B cell (primary cell): ENCODE measurements at regions of chr10 and their contacts with region 1.

Region 1: DNA sequence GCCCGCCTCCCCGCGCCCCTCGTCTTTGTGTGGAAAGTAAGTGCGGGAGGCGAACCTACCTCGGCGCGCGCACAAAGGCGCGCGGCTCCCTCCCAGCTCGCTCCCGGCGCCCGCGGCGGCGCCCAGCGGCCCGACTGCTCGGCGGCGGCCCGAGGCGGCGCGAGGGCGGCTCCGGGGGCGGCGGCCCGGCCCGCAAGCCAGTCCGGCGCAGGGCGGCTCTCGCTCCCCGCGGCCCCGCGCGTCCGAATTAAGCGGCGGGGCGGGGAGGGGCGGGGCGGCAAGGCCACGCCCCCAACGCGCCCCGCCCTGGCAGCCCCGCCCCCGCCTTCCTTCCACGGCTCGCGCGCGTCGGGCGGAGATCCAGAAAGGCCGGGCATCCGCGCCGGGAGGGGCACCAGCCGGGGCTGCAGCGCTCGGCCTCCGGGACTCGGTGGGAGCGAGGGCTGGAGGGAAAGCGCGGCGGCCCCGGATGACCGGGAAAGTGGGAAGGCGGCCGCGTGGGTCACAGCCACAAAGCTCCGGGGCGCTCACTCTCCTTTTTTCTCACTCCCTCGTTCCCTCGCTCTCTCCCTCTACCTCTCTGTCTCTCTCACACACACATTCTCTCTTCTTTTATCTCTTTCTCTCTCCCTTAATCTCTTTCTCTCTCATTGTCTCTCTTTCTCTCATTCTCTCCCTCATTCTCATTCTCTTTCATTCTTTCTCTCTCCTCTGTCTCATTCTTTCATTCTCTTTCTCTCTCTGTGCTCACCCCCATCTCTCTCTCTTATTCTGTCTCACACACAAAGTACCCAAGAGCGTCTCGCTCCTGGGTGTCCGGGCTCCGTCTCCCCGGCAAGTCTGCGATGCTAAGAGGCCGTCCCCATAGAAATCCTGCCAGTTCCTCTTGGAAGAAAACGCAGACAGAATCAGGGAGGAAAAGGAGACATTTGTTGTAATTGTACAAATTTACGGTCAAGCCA is 170.2 kb downstream of the FAM107B start:
- DNase-seq: peak; percentile 84
- ATAC-seq: peak; percentile 68
- H3K4me3 ChIP-seq: peak overlapping the region; percentile 58 to 85 (median 70)
- H3K4me3 Mint-ChIP-seq: peak overlapping the region; percentile 86
- H3K27ac ChIP-seq: peak overlapping the region; percentile 54 to 61
- H3K27ac Mint-ChIP-seq: peak overlapping the region; percentile 78
- H3K4me1 ChIP-seq: peaks cover 53 to 62% of the 10 kb centered on the region in 2 donors
- H3K4me1 Mint-ChIP-seq: peaks cover 75% of the 10 kb centered on the region
- H3K27me3 ChIP-seq: no peaks in the 10 kb centered on the region
- H3K27me3 Mint-ChIP-seq: no peaks in the 10 kb centered on the region
- CTCF ChIP-seq: peak; percentile 16

Region 2: DNA sequence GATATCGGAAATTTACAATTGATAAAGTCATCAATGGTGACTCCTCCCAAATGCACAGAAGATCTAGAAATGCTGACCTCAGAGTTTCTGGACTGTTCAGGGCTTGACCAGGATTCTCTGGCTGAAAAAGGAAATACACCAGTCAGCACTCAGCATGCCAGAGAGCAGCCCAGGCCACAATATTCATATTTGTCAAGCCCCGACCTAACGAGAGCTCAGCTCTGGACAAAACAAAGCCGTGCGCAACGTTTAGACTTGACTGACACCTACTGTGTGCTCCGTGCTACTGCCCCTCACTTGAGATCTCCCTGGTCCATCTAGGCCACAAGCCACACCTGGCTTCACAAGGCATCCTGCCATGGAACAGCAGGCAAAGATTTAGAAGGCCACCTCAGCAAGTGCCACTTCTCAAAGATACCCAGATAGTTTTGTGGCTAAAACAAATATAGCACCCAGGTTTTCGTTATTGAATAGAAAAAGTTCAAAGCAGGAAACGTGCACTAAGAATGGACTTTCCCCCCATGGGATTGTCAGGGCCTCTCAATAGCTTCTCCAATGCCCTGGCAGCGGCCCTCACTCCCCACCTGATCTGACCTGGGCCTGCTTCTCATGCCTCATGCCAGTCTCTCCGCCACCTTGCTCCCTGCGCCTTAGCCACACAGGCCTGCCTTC is 48.0 kb before region 1 on chr10:
- CTCF ChIA-PET with region 1: no interaction called
- POLR2A ChIA-PET with region 1: no interaction called
- intact Hi-C with region 1: loop called (anchors 2 kb)
- DNase-seq: peak; percentile 68
- ATAC-seq: peak; percentile 60
- H3K4me3 ChIP-seq: peak overlapping the region in 1 of 5 experiments; percentile 5
- H3K4me3 Mint-ChIP-seq: peak overlapping the region; percentile 79
- H3K27ac ChIP-seq: peak overlapping the region; percentile 54 to 70
- H3K27ac Mint-ChIP-seq: peak overlapping the region; percentile 92
- H3K4me1 ChIP-seq: peaks cover 82 to 84% of the 10 kb centered on the region in 2 donors
- H3K4me1 Mint-ChIP-seq: peaks cover 92% of the 10 kb centered on the region
- H3K27me3 ChIP-seq: no peaks in the 10 kb centered on the region
- H3K27me3 Mint-ChIP-seq: no peaks in the 10 kb centered on the region
- CTCF ChIP-seq: peak; percentile 43

Region 3: DNA sequence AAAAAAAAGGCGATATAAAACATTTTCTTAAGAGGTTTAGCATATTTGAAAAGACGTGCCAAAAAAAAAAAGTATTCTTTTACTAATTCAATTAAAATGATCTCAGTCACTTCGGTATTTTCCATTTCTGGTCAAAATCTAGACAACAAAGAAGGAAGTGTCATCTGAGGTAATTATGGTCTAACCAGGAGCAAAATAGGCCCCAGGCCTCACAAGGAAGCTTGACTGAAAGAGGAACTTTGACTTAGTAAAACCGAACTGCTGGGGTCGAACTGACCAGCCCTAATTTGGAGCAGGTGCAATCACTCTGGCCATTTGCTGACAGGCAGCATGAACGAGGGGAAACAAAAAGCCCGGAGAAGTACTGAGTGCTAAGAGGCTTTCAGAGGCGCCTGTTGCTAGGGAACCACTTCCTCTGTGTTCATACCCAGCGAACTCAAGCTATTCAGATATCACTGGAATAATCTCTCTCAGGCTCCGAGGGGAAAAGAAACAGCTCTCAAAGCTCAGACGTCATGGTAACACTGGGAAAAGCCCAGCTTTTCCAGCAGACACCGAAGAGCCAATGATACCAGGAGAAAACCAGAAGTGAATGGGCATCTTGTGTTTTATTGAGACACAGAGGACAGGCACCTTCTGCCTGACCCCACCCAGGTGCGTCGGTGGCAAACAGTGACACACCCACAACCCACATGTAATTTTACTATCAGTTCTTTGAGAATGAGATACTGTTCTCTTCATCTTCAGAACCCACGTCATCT is 43.7 kb after region 1 on chr10:
- CTCF ChIA-PET with region 1: interaction called, 6 read pairs
- POLR2A ChIA-PET with region 1: interaction called, 9 read pairs
- intact Hi-C with region 1: loop called (anchors 1 kb)
- DNase-seq: peak; percentile 92
- ATAC-seq: peak; percentile 81
- H3K4me3 ChIP-seq: peak overlapping the region; percentile 29 to 58 (median 35)
- H3K4me3 Mint-ChIP-seq: peak overlapping the region; percentile 83
- H3K27ac ChIP-seq: peak overlapping the region; percentile 96 to 99
- H3K27ac Mint-ChIP-seq: peak overlapping the region; percentile 98
- H3K4me1 ChIP-seq: peaks cover 57 to 71% of the 10 kb centered on the region in 2 donors
- H3K4me1 Mint-ChIP-seq: peaks cover 82% of the 10 kb centered on the region
- H3K27me3 ChIP-seq: no peaks in the 10 kb centered on the region
- H3K27me3 Mint-ChIP-seq: no peaks in the 10 kb centered on the region
- CTCF ChIP-seq: no peak

Region 4: DNA sequence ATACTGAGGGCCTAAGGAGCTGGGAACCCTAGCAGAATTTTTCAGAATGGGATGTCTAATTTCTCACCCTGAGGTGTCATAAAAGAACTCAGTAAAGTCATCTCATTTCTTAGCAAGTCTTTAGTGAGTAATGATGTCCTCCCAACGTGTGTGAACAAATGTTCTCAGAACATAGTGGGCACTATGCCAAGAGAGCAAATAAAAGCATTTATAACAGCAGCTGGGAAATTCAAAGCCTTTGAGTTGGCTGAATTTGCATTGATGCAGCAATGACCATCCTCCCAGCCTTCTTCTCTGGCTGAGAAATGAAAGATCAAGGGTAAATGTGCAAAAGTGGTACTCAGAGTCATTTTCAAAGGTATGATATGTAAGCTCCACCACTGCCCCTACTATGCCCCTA is 60.8 kb after region 1 on chr10:
- CTCF ChIA-PET with region 1: no interaction called
- POLR2A ChIA-PET with region 1: no interaction called
- intact Hi-C with region 1: no loop called
- DNase-seq: no peak
- ATAC-seq: no peak
- H3K4me3 ChIP-seq: no peak overlapping the region
- H3K4me3 Mint-ChIP-seq: no peak overlapping the region
- H3K27ac ChIP-seq: no peak overlapping the region
- H3K27ac Mint-ChIP-seq: no peak overlapping the region
- H3K4me1 ChIP-seq: peaks cover 18 to 21% of the 10 kb centered on the region in 2 donors
- H3K4me1 Mint-ChIP-seq: peaks cover 31% of the 10 kb centered on the region
- H3K27me3 ChIP-seq: no peaks in the 10 kb centered on the region
- H3K27me3 Mint-ChIP-seq: no peaks in the 10 kb centered on the region
- CTCF ChIP-seq: no peak

Region 5: DNA sequence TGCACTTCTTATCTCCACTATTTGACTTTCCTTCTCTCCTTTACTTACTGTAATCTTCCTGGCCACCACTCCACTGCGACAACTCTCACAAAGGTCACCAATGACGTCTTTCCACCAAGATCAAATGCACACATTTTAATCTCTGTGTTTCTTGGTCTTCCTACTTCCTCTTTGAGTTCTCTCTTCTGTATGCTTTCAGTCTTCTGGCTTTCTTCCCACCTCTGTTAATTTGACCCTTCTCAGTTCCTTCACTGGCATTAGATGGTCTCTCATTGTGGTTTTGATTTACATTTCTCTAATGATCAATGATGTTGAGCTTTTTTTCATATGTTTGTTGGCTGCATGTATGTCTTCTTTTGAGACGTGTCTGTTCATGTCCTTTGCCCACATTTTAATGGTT is 138.4 kb after region 1 on chr10:
- CTCF ChIA-PET with region 1: interaction called, 5 read pairs
- POLR2A ChIA-PET with region 1: interaction called, 6 read pairs
- intact Hi-C with region 1: loop called (anchors 1 kb)
- DNase-seq: peak; percentile 78
- ATAC-seq: peak; percentile 83
- H3K4me3 ChIP-seq: peak overlapping the region in 1 of 5 experiments; percentile 14
- H3K4me3 Mint-ChIP-seq: peak overlapping the region; percentile 74
- H3K27ac ChIP-seq: peak overlapping the region; percentile 93 to 98
- H3K27ac Mint-ChIP-seq: peak overlapping the region; percentile 88
- H3K4me1 ChIP-seq: peaks cover 71 to 76% of the 10 kb centered on the region in 2 donors
- H3K4me1 Mint-ChIP-seq: peaks cover 83% of the 10 kb centered on the region
- H3K27me3 ChIP-seq: no peaks in the 10 kb centered on the region
- H3K27me3 Mint-ChIP-seq: no peaks in the 10 kb centered on the region
- CTCF ChIP-seq: no peak

Region 6: DNA sequence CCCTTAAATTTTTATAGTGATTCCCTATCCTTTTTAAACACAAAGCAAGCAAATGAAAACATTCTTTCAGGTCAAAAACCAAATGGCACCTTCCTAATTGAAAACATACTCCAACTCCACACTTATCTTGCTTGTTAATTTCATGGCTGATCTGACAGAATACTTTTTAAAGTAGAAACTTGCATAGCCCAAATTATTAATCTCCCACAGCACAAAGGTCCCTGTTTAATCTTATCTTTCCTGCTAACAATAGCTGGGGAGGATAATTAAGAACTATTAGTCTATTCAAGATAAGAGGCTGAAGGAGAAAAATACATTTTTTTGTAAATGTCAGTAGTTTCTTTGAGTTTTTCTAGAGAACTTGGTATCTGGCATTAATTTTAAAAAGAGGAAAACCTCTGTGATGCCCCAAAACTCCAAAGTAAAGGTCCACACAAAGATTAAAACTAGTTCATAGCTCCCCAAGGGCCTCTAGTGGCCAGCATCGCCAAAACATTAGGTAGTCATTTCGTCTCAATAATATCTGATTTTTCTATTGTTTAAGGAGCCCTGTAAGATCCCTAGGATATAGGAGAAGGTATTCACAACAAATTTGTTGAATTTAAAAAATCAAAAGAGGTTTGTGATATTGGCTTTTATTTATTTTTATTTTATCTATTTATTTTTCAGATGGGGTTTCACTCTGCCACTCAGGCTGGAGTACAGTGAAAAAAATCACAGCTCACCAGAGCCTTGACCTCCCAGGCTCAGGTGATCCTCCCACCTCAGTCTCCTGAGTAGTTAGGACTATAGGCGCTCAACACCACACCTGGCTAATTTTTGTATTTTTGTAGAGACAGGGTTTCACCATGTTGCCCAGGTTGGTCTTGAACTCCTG is 218.7 kb after region 1 on chr10:
- CTCF ChIA-PET with region 1: interaction called, 22 read pairs
- POLR2A ChIA-PET with region 1: interaction called, 3 read pairs
- intact Hi-C with region 1: loop called (anchors 1 kb)
- DNase-seq: peak; percentile 69
- ATAC-seq: peak; percentile 78
- H3K4me3 ChIP-seq: no peak overlapping the region
- H3K4me3 Mint-ChIP-seq: no peak overlapping the region
- H3K27ac ChIP-seq: no peak overlapping the region
- H3K27ac Mint-ChIP-seq: no peak overlapping the region
- H3K4me1 ChIP-seq: peaks cover 16 to 19% of the 10 kb centered on the region in 2 donors
- H3K4me1 Mint-ChIP-seq: peaks cover 32% of the 10 kb centered on the region
- H3K27me3 ChIP-seq: no peaks in the 10 kb centered on the region
- H3K27me3 Mint-ChIP-seq: no peaks in the 10 kb centered on the region
- CTCF ChIP-seq: peak; percentile 83

Region 7: DNA sequence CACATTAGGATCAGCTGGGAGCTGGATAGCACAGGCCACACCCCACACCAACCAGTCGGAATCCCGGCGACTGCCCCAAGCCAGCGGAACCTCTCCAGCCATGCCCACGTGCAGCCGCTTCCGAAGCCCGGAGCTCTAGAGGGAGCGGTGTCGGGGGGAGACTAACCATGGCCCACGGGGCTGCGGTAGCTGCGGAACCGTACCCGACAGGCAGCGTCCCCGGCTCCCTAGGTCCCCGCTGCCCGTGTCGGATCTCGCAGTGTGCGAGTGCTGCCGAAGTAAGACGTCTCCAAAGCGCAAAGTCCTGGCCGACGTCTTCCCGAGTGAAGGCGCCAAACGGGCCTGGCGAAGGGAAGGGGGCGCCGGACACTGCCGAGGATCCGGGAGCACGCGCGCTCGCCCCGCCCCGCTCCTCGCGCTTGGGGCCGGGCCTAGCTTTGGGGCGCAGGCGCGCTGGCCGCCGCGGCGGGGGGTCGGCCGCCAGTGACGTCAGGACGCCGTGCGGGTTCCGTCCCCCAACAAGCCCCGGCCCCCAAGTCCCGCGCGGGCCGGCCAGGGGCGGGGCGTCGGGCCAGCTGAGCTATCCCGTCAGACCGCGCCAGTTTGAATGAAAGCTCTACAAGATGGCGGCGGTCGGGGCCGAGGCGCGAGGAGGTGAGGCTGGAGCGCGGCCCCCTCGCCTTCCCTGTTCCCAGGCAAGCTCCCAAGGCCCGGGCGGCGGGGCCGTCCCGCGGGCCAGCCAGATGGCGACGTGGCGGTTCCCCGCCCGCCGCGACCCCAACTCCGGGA is 274.0 kb after region 1 on chr10 and contains the start of gene SUV39H2:
- CTCF ChIA-PET with region 1: no interaction called
- POLR2A ChIA-PET with region 1: no interaction called
- intact Hi-C with region 1: loop called (anchors 1 kb)
- DNase-seq: peak; percentile 96
- ATAC-seq: peak; percentile 92
- H3K4me3 ChIP-seq: peak within 1 kb of the TSS; percentile 53 to 98 (median 94)
- H3K4me3 Mint-ChIP-seq: peak within 1 kb of the TSS; percentile 96
- H3K27ac ChIP-seq: peak within 1 kb of the TSS; percentile 64 to 80
- H3K27ac Mint-ChIP-seq: peak within 1 kb of the TSS; percentile 87
- H3K4me1 ChIP-seq: peaks cover 17 to 23% of the 10 kb centered on the region in 2 donors
- H3K4me1 Mint-ChIP-seq: peaks cover 28% of the 10 kb centered on the region
- H3K27me3 ChIP-seq: peaks cover 0 to 6% (median 0%) of the 10 kb centered on the region in 4 experiments
- H3K27me3 Mint-ChIP-seq: no peaks in the 10 kb centered on the region
- CTCF ChIP-seq: no peak
- total RNA-seq, gene SUV39H2: 3.2 and 3.5 TPM in 2 replicates

Region 8: DNA sequence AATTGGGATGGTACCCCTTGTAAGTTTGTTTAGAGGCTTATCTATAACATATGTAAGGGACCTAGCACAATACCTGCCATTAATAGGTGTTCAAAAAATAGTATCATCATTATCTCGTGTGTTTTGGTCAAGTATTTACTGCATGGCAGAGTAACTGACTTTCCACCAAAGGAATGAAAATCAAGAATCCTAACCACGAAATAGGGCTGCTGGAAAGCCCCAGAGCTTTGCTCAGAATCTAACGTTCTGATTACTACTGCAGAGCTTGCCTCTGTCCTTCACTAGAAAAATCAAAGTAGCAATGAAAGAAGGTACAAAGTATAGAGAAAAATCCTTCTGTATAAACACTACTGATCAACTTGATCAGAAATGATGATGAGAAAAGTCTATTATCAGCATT is 314.5 kb after region 1 on chr10:
- CTCF ChIA-PET with region 1: no interaction called
- POLR2A ChIA-PET with region 1: no interaction called
- intact Hi-C with region 1: no loop called
- DNase-seq: no peak
- ATAC-seq: no peak
- H3K4me3 ChIP-seq: no peak overlapping the region
- H3K4me3 Mint-ChIP-seq: no peak overlapping the region
- H3K27ac ChIP-seq: no peak overlapping the region
- H3K27ac Mint-ChIP-seq: no peak overlapping the region
- H3K4me1 ChIP-seq: no peaks in the 10 kb centered on the region
- H3K4me1 Mint-ChIP-seq: peaks cover 4% of the 10 kb centered on the region
- H3K27me3 ChIP-seq: no peaks in the 10 kb centered on the region
- H3K27me3 Mint-ChIP-seq: no peaks in the 10 kb centered on the region
- CTCF ChIP-seq: no peak

Region 9: DNA sequence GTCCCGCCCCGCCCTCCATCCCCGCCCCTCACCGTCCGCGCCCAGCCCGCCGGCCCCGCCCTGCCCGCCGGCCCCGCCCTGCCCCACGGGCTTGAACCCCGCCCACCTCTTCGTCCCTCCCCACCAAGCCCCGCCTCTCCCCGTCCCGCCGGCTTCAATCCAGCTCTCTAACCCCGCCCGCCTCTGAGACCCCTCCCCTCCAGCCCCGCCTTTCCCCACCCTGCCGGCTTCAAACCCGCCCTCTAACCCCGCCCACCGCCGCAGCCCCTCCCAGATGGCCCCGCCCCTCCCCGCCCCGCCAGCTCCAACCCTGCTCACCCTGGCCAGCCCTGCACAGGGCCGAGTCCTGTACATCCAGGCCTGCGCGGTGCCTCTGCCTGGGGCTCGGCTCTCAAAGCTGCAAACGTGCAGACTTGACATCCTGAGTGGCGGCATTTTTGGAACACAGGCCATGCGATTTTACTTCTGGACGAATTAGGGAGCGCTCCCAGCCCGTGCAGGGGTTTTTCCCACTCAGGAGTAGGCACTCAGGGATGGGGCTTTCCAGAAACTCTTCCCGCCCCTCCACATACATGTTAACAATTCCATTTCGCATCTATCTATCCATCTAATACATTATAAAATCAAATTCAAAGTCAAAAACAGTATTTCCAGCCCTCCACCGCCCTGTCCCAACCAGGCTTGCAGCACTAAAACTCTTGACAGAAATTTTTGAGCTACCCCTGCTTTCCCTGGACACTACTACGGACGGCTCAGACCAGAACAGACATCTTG is 564.5 kb after region 1 on chr10:
- CTCF ChIA-PET with region 1: no interaction called
- POLR2A ChIA-PET with region 1: no interaction called
- intact Hi-C with region 1: loop called (anchors 2 kb)
- DNase-seq: peak; percentile 94
- ATAC-seq: peak; percentile 87
- H3K4me3 ChIP-seq: peak overlapping the region in 4 of 5 experiments; percentile 19 to 52 (median 32)
- H3K4me3 Mint-ChIP-seq: peak overlapping the region; percentile 59
- H3K27ac ChIP-seq: no peak overlapping the region
- H3K27ac Mint-ChIP-seq: no peak overlapping the region
- H3K4me1 ChIP-seq: peaks cover 21 to 24% of the 10 kb centered on the region in 2 donors
- H3K4me1 Mint-ChIP-seq: peaks cover 29% of the 10 kb centered on the region
- H3K27me3 ChIP-seq: no peaks in the 10 kb centered on the region
- H3K27me3 Mint-ChIP-seq: peaks cover 7% of the 10 kb centered on the region
- CTCF ChIP-seq: no peak